Activated naive CD4-positive, alpha-beta T cell treated with anti-CD3 and anti-CD28 coated beads for 36 hours (primary cell): ENCODE measurements at regions of chr10 and their contacts with region 1.

Region 1: GRCh38 chr10:23702977-23703414 is 264.1 kb downstream of the OTUD1 start:
- DNase-seq: peak; percentile 72
- H3K4me3 Mint-ChIP-seq: no peak overlapping the region
- H3K27ac Mint-ChIP-seq: no peak overlapping the region
- H3K4me1 Mint-ChIP-seq: peaks cover 13% of the 10 kb centered on the region
- H3K27me3 Mint-ChIP-seq: peaks cover 20% of the 10 kb centered on the region

Region 2: DNA sequence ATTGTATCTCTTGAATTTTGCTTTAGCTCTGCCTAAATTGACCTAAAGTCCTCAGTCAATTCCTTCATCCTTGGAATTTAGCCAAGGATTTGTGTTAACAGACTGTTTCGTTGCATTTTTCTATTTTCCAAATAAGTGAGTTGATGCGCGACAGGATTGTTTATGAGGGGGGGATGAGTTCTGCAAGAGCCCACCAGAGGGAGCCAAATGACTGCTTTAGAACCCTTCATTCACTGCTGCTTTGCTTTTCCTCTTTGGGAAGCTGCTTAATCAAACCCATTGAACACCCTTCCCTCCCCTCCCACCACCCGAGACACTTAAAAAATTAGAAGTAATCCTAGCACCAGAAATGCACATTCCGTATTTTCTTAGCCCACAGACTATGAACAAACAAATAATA is 544.6 kb before region 1 on chr10:
- CTCF ChIA-PET with region 1: interaction called, 4 read pairs
- intact Hi-C with region 1: loop called (anchors 1 kb)
- DNase-seq: peak; percentile 61
- H3K4me3 Mint-ChIP-seq: no peak overlapping the region
- H3K27ac Mint-ChIP-seq: no peak overlapping the region
- H3K4me1 Mint-ChIP-seq: peaks cover 8% of the 10 kb centered on the region
- H3K27me3 Mint-ChIP-seq: peaks cover 33% of the 10 kb centered on the region

Region 3: GRCh38 chr10:23314835-23315239 is 388.2 kb before region 1 on chr10:
- CTCF ChIA-PET with region 1: interaction called, 11 read pairs
- intact Hi-C with region 1: loop called (anchors 1 kb)
- DNase-seq: peak; percentile 71
- H3K4me3 Mint-ChIP-seq: no peak overlapping the region
- H3K27ac Mint-ChIP-seq: no peak overlapping the region
- H3K4me1 Mint-ChIP-seq: peaks cover 4% of the 10 kb centered on the region
- H3K27me3 Mint-ChIP-seq: no peaks in the 10 kb centered on the region

Region 4: GRCh38 chr10:23525406-23525805 is 177.6 kb before region 1 on chr10:
- CTCF ChIA-PET with region 1: interaction called, 15 read pairs
- intact Hi-C with region 1: no loop called
- DNase-seq: peak; percentile 29
- H3K4me3 Mint-ChIP-seq: no peak overlapping the region
- H3K27ac Mint-ChIP-seq: no peak overlapping the region
- H3K4me1 Mint-ChIP-seq: peaks cover 13% of the 10 kb centered on the region
- H3K27me3 Mint-ChIP-seq: no peaks in the 10 kb centered on the region

Region 5: GRCh38 chr10:23540401-23541030 is 162.5 kb before region 1 on chr10:
- CTCF ChIA-PET with region 1: interaction called, 11 read pairs
- intact Hi-C with region 1: loop called (anchors 1 kb)
- DNase-seq: no peak
- H3K4me3 Mint-ChIP-seq: no peak overlapping the region
- H3K27ac Mint-ChIP-seq: peak overlapping the region; percentile 65
- H3K4me1 Mint-ChIP-seq: peaks cover 64% of the 10 kb centered on the region
- H3K27me3 Mint-ChIP-seq: no peaks in the 10 kb centered on the region

Region 6: GRCh38 chr10:23795731-23796130 is 92.7 kb after region 1 on chr10:
- CTCF ChIA-PET with region 1: no interaction called
- intact Hi-C with region 1: no loop called
- DNase-seq: no peak
- H3K4me3 Mint-ChIP-seq: no peak overlapping the region
- H3K27ac Mint-ChIP-seq: no peak overlapping the region
- H3K4me1 Mint-ChIP-seq: no peaks in the 10 kb centered on the region
- H3K27me3 Mint-ChIP-seq: no peaks in the 10 kb centered on the region

Region 7: DNA sequence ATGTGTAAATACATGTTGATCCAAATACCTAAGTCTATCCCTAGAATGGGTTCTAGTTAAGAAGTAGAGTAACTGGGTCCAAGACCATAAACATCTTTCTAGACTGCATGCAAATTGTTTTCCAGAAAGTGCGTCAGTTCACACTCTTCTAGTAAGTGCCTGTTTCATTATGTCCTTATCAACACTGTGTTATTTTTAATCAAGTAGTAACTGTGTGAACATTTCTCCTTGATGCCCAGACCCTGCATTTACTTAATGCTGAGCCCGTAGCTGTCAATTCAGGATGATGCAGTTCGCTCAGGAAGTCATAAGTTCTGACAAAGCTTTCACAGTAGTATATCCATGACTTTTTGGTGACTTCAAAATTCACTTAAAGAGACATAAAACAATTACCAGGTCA is 110.7 kb after region 1 on chr10:
- CTCF ChIA-PET with region 1: no interaction called
- intact Hi-C with region 1: no loop called
- DNase-seq: no peak
- H3K4me3 Mint-ChIP-seq: no peak overlapping the region
- H3K27ac Mint-ChIP-seq: no peak overlapping the region
- H3K4me1 Mint-ChIP-seq: no peaks in the 10 kb centered on the region
- H3K27me3 Mint-ChIP-seq: peaks cover 3% of the 10 kb centered on the region

Region 8: DNA sequence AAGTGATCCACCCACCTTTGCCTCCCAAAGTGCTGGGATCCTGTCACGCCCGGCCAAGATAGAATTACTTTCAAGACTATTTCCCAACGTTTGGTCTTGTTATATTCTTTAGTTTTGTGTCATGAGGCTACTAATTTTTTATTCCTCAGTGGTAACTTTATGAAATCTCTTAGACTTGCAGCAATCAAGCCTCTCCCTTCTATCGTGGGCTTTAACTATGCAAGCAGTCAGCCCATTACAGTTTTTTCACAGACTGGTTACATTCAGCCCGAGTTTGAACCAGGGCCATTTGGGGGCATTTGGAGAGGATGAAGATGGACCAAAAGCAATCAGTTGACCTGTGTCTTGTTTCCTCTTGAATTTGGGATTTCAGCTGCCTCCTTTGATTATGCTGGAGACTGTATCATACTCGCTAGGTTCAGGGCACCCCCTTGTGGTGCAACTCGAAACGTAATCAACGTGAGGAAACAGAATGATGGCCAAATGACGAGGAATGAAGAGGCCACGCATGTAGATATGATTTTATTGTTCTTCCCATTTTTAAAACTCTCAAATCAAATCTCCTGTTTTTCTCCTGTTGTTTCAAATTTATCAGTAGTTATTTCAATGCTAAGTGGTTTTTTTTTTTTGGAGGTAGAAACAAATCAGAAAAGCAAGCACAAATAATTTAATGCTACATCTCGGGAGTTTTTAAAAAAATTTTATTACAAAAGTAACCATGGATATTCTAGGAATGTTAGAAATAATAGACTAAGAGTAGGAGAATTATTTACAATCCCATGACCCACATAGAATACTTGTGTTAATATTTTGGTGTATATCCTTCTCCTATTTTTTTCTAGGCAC is 657.5 kb after region 1 on chr10:
- CTCF ChIA-PET with region 1: no interaction called
- intact Hi-C with region 1: loop called (anchors 10 kb)
- DNase-seq: peak; percentile 74
- H3K4me3 Mint-ChIP-seq: no peak overlapping the region
- H3K27ac Mint-ChIP-seq: no peak overlapping the region
- H3K4me1 Mint-ChIP-seq: no peaks in the 10 kb centered on the region
- H3K27me3 Mint-ChIP-seq: peaks cover 4% of the 10 kb centered on the region